ENCODE measurements at regions of chr5 and their contacts with region 1.

Region 1: GRCh38 chr5:138035605-138036537 is 3.0 kb upstream of the FAM13B start:
- DNase-seq: peak; percentile 76
- H3K4me3 Mint-ChIP-seq: no peak overlapping the region
- H3K27ac Mint-ChIP-seq: no peak overlapping the region
- H3K4me1 Mint-ChIP-seq: peaks cover 31% of the 10 kb centered on the region
- H3K27me3 Mint-ChIP-seq: no peaks in the 10 kb centered on the region

Region 2: DNA sequence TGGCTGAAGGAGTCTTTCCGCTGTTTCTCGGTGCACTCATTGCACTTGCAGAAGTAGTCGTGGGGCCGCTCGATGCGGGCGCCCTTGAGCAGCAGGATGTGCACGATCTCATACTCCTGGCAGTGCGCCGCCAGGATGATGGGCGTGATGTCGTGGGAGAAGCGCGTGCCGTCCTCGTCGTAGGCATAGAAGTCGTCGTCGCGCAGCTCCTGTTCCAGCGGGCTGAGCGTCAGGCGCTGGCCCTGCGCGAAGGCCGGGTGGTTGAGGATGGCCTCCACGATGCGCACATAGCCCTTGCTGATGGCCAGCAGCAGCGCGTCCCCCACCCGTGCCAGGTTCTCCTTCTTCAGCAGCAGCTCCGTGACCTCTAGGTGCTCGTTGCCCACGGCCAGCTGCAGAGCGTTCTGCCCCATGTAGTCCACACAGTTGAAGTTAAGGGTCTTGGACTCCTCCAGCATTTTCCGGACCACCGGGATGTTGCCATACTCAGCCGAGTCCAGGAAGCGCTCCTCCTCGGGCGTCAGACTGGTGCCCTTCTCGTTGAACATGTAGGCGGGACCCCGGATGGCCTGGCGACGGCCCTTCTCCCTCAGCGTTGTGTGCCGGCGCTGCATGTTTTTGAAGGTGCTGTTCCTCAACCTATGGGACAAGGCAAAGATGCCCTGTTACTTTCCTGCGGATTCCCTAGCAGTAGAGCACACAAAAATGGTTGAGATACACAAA is 1679.0 kb before region 1 on chr5:
- CTCF ChIA-PET with region 1: no interaction called
- intact Hi-C with region 1: no loop called
- DNase-seq: no peak
- H3K4me3 Mint-ChIP-seq: no peak overlapping the region
- H3K27ac Mint-ChIP-seq: no peak overlapping the region
- H3K4me1 Mint-ChIP-seq: no peaks in the 10 kb centered on the region
- H3K27me3 Mint-ChIP-seq: peaks cover 2% of the 10 kb centered on the region

Region 3: DNA sequence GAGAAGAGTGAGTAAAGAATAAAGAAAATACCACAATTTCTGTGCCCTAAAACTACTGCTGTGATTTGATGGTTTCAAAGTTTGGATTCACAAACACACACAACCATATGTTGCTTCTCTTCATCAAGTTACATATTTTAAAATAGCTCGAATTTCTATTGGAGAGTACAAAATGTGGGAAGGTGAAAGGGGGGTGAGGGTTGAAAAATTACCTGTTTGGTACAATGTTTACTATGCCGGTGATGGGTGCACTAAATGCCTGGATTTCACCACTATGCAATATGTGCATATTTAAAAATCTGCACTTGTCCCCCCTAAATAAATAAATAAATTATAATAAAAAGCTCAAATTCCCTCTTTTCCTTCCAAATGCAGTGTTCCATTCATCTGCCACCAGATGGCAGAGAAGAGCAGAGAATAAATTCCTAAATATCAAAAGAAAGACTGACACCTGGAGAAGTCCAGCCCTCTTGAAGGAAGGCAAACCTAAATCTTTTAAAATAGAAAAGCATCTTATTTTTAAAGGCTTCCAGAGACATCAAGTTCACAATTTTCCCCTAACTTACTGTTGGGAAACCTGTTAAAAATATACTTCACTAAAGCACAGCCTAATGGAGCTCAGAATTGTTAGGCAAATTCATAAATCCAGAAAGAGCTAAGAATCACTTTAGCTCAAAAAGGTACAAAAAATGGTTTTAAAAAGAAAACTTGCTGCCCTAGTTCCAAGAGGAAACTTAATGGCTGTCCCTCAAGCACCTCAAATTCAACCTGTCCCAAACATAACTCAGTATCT is 256.9 kb before region 1 on chr5:
- CTCF ChIA-PET with region 1: interaction called, 23 read pairs
- intact Hi-C with region 1: loop called (anchors 1 kb)
- DNase-seq: no peak
- H3K4me3 Mint-ChIP-seq: no peak overlapping the region
- H3K27ac Mint-ChIP-seq: no peak overlapping the region
- H3K4me1 Mint-ChIP-seq: no peaks in the 10 kb centered on the region
- H3K27me3 Mint-ChIP-seq: no peaks in the 10 kb centered on the region

Region 4: GRCh38 chr5:137938751-137939143 is 97.1 kb before region 1 on chr5:
- CTCF ChIA-PET with region 1: interaction called, 3 read pairs
- intact Hi-C with region 1: loop called (anchors 2 kb)
- DNase-seq: no peak
- H3K4me3 Mint-ChIP-seq: no peak overlapping the region
- H3K27ac Mint-ChIP-seq: peak overlapping the region; percentile 77
- H3K4me1 Mint-ChIP-seq: peaks cover 39% of the 10 kb centered on the region
- H3K27me3 Mint-ChIP-seq: no peaks in the 10 kb centered on the region

Region 5: GRCh38 chr5:138025285-138025684 is 10.6 kb before region 1 on chr5:
- CTCF ChIA-PET with region 1: interaction called, 15 read pairs
- intact Hi-C with region 1: no loop called
- DNase-seq: no peak
- H3K4me3 Mint-ChIP-seq: no peak overlapping the region
- H3K27ac Mint-ChIP-seq: no peak overlapping the region
- H3K4me1 Mint-ChIP-seq: peaks cover 69% of the 10 kb centered on the region
- H3K27me3 Mint-ChIP-seq: no peaks in the 10 kb centered on the region

Region 6: DNA sequence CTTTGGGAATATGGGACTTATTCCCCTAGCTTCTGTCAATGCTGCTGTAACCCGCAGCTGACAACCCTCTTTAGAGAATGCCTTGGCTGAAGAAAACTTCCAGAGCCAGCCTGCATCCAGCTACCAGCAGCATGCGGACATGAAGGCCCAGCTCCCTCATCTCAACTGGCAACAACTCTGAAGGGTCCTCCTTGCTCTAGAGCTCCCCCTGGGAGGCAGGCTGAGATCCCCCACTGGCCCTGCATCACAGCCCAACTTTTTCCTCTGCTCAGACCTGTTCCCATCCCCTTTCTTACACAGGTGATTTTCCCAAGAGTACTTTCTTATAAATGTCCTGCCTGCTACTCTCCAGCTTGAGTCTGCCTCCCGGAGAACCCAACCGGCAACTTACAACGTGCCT is 29.2 kb after region 1 on chr5:
- CTCF ChIA-PET with region 1: interaction called, 243 read pairs
- intact Hi-C with region 1: loop called (anchors 1 kb)
- DNase-seq: peak; percentile 14
- H3K4me3 Mint-ChIP-seq: no peak overlapping the region
- H3K27ac Mint-ChIP-seq: no peak overlapping the region
- H3K4me1 Mint-ChIP-seq: peaks cover 4% of the 10 kb centered on the region
- H3K27me3 Mint-ChIP-seq: no peaks in the 10 kb centered on the region

Region 7: DNA sequence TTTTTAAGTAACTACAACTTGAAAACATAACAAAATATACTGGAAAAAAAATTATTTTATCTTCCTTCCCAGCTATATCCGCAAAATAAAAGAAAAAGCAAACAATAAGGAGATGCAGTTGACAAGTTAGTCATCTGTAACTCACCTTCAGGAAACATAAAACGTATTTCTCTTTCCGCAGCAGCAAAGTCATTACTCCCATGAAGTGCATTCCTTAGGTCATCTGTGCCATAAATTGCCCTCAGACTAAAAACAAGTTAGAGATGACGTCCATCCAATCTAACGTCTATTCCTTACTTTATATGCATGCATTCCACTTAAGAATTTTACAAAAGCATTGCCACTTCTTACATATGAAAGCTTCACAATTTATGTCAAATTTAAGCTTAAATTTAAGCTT is 92.5 kb after region 1 on chr5:
- CTCF ChIA-PET with region 1: interaction called, 31 read pairs
- intact Hi-C with region 1: loop called (anchors 1 kb)
- DNase-seq: no peak
- H3K4me3 Mint-ChIP-seq: no peak overlapping the region
- H3K27ac Mint-ChIP-seq: no peak overlapping the region
- H3K4me1 Mint-ChIP-seq: peaks cover 2% of the 10 kb centered on the region
- H3K27me3 Mint-ChIP-seq: no peaks in the 10 kb centered on the region

Region 8: DNA sequence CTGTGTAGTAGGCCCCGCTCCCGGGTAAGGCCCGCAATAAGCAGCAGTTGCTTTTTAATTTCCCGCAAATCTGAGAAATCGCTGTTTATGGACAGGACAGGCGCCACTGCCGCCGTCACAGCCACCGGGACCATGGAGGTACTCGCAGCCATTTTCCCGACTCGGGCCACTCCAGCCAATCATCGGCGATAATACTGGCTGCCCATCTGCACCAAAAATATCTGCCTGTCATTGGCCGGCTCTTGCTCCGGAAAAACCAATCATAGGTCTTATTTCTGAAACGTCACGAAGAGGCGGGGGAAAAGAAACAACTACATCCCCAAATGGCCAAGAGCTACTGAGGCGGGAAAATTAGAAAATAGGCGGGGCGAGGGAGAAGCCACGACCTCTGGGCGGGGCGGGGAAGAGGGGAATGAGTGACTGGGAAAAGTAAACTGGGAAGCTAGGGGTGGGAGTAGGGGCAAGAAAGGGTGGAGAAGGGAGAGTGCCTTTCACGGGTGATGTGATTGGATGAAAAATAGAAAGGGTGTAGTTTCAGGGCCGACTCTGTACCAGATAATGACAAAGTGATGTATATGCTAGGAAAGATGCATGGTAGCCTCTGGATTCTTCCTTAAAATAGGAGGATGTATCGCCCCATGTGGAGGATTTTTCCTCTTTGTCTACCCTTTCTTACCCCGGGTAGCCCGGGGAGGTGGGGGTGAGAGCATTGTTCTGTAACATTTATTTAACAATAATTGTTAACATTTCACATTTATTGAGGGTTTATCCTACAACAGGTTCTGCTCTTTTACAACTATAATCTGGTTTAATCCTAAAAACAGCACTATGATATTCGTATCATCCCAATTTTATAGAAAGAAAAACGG is 177.5 kb after region 1 on chr5 and contains the start of gene CDC23:
- CTCF ChIA-PET with region 1: no interaction called
- intact Hi-C with region 1: loop called (anchors 2 kb)
- DNase-seq: peak; percentile 96
- H3K4me3 Mint-ChIP-seq: peak within 1 kb of the TSS; percentile 98
- H3K27ac Mint-ChIP-seq: peak within 1 kb of the TSS; percentile 89
- H3K4me1 Mint-ChIP-seq: peaks cover 18% of the 10 kb centered on the region
- H3K27me3 Mint-ChIP-seq: no peaks in the 10 kb centered on the region
- total RNA-seq, gene CDC23: 44.3 to 47.2 TPM

Measured in activated naive CD4-positive, alpha-beta T cell treated with anti-CD3 and anti-CD28 coated beads for 36 hours (primary cell).